ENCODE measurements at regions of chr1 and their contacts with region 1.

Region 1: DNA sequence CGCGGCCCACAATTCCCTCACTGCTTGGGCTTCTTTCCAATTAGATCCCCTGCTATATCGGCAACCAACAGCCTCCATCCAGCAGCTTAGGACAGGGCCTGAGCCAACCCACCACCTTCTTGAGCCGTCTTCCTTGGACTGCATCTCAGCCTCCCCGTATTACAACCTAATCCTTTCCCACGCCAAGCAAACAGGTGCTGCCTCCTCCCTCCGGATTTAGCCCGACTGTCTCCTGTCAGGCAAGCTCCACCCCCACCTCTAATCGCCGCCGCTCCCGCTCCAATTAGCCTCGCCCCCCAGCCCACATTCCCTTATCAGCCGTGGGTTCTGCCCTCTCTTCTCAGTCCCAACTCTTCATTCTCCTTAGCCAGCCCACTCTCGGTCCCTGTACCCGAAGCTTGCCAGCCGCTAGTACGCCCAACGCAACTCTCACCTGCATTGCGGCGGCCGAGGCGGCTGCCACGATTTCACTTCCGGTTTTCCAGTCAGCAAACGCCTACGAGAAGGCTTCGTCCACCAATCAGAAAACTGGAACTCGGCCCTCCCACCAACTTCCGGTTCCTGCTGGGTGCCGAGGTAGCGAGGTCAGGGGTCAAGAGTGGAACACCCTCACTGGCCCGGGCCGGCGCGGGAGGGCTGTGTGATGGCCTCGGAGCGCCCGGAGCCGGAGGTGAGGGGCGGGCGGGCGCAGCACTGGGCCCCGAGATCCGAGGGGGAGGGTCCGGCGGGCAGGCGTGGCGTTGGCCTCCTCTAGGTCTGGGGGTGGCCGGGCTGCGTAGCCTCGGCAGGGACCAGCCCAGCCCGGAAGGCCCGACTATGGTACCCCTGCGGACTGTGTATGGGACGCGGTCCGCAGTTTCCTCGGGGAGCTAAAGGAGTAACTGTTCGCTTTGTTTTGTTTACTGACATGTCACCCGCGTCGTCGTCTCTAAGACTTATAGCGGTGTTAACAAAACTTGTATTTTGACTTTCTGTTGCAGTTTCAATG is at the starts of genes MED8 and SZT2:
- DNase-seq: peak; percentile 87 to 99 (median 96)

Region 2: GRCh38 chr1:43188106-43188505 is 201.5 kb before region 1 on chr1:
- intact Hi-C with region 1: no loop called
- DNase-seq: no peak

Region 3: GRCh38 chr1:43238085-43238484 is 151.5 kb before region 1 on chr1:
- intact Hi-C with region 1: loop called (anchors 5 kb)
- DNase-seq: peak; percentile 23 to 94 (median 84)

Region 4: DNA sequence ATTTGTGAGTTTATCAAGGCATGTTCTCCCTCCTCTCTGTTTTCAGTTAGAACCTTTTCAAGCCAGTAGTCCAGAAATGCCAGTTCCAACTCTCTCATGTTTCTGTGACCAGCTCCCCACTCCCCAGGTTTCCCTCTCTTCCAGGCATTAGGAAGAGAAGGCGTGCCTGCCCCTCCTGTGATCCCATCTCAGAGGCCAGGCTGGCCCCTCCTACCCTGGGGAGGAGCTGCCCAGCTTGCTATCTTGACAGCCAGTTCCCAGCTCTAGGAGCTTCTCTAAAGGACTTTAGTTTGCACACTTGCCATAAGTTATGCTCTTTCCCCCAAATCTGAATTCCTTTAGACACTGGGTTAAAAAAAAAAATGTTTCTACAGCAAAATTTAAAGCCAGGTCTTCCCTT is 55.2 kb after region 1 on chr1:
- intact Hi-C with region 1: loop called (anchors 10 kb)
- DNase-seq: peak in 4 of 42 donors; percentile 5 to 17 (median 10)

Region 5: DNA sequence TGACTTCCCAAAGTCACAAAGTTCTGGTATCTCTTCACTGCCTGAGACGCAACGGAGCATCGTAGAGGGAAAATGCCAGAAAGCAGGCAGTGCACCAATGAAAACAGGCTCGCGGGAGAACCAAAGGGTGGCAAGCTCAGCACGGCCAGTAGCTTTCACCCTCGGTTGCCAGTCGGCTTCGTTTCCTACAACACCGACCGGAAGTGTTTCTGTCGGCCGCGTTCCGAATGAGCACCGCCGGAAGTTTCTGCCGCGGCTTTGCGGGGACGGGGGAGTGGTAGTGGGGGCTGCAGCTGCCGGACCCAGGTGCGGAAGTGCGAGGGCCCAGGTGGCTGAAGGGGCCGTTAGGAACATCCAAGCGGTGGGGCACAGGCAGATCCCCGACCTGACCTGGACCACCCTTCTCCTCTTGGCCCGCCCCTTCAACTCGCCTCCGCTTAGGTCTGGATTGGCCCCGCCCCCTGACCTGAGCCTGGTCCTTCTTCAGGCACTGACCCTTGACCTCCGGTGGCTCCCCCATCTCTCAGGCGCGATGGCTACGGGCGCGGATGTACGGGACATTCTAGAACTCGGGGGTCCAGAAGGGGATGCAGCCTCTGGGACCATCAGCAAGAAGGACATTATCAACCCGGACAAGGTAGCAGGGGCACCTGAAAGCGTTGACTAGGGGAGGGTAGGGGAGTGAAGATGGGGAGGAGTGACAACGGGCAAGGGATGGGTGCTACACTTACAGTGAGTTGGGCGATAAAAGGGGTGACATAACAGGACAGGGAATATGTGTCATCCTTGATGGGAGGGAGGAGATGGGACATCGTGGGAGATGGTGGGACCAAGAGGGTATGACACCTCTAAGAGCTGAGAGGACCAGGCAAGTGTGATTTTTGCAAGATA is 823.8 kb after region 1 on chr1 and contains the start of gene DMAP1:
- intact Hi-C with region 1: no loop called
- DNase-seq: peak; percentile 83 to 97 (median 92)

Measured in head of caudate nucleus (tissue), 42 donors.